ENCODE measurements at regions of chr2 and their contacts with region 1.

Region 1: DNA sequence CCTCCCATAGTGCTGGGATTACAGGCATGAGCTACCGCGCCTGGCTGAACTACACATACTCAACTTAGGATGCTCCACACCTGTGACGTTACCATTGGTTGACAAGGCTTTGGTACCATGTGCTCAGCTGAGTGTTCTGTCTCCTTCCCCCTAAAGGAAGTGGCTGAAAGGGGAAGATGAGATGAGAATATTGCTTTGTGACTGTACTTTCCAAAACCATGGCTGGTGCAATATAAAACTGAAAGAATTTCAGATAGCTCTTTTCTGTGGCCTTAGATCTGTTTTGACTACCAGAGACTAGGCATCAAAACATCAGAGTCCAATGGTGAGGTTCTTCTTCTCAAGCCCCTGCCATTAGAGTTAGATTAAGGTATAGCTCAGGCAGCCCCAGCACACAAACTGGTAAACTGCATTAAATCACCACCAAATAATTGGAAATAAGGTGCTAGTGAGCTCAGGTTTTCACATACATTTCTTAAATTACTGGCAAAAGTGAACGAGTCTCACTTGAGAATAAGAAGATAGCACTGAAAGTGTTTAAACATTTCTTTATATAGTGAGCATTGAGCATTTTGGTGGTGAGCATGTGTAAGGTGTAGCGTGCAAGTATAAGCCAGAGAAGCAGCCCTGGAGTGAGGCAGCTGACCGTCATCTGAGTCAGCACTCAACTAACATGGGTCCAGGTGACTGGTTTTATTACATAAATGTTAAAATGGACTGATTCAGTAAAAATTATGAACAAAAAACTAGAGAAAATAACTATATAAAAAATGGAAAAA is 113.5 kb upstream of the FZD5 start:
- DNase-seq: no peak
- H3K4me3 ChIP-seq: no peak overlapping the region
- CTCF ChIP-seq: no peak
- POLR2A ChIP-seq: no peak

Region 2: GRCh38 chr2:207291625-207292252 is 591.5 kb before region 1 on chr2:
- intact Hi-C with region 1: no loop called
- DNase-seq: no peak
- H3K4me3 ChIP-seq: no peak overlapping the region
- CTCF ChIP-seq: no peak
- POLR2A ChIP-seq: no peak

Region 3: DNA sequence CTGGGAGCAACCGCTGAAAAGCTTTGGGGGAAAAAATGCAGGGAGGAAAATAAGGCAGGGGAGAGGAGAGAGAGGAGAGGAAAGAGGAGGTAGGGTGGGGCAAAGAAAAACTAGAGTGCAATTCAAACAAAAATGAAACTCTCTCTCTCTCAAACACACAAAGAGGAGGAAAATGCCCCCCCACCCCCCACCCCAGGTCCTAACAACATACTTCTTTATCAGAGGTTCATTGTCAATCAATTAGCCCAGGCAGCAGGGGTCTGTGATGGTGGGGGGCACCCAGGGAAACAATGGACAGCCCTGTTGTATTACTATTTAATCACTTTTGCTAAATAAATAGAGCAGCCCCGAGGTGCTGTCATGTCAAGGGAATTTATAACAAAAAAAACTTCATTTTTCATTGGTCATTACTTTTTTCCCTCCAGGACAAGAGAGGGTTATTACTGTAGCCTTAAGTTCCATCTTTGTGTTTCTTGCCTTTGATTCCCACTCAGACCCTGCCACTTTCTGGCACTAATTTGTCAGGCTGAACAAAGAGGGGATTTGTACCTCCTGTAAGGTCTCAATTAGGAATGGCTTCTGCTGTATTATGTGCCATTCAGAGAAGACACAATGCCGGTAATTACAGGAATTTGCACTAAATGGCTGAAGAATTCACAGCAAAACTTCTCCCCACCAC is 87.1 kb after region 1 on chr2:
- intact Hi-C with region 1: loop called (anchors 2 kb)
- DNase-seq: no peak
- H3K4me3 ChIP-seq: no peak overlapping the region
- CTCF ChIP-seq: no peak
- POLR2A ChIP-seq: no peak

Region 4: DNA sequence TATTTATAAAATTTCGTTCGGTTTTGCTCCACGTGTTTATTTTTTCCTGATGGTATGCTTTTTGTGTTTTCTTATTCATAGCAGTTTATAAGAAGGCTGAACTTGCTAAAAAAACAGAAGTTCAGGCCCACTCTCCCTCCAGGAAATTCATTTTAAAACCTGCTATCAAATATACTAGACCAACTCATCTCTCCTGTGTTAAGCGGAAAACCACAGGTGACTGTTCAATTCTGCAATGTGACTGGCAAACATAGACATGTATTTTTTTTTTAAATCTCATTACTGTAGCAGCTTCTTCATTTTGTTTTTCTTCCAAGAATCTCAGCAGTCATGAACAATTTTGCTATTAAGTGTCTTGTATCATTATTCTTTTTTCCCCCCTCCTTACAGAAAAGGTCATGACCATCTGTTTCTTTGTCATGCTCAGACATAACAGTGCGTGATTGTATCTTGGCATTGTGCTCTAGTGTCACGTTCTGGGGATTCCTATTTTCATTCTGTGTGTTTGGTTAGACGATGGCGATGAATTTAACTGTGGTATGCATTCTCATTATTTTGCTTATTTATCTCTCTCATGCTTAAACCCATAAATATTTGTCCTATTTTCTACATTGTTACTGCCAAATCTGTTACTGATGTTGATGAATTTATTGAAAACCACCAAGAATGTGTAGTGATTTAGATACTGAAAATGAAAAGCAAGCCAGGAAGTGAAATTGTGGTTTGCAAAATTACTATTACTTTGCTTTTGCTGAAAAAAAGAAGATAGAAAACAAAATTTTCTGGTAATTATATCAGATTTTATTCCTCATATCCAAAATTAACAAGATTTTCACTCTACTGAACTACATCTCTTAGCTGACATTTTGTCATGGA is 1813.9 kb after region 1 on chr2:
- intact Hi-C with region 1: no loop called
- DNase-seq: no peak
- H3K4me3 ChIP-seq: no peak overlapping the region
- CTCF ChIP-seq: no peak
- POLR2A ChIP-seq: no peak